Cardiac septum (tissue), 1 donor: ENCODE measurements at regions of chr17 and their contacts with region 1.

Region 1: DNA sequence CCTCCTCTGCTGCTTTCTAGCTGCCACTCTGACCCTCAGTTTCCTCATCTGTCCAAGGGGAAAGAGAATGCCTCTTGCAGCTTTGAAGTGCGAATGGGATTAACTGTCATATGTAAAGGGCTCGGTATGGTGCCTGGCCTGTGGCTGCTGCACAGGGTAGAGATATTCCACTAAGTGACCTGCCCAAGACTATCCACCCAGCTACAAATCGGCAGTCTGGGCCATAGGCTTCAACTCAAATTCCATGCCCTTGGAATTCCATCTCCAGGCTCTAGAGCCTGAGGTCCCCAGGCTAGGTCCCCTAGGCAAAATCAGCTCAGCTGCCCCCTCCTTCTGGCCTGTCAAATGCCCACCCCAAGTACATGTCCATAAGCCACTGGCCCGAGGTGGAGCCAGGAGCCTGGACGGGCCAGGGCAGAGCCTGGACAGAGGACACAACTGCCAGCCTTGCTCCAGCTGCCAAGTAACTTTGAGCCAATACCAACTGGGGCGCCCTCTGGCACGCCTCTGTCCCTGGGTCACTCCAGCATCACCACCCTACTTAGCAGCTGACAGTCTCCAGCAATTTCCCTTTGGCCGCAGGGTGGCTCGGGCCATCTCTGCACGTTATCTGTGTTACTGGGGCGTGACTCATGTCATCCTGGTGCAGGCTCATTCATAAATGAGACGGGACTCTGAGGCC is 57.2 kb downstream of the SDK2 start:
- DNase-seq: no peak

Region 2: GRCh38 chr17:73455050-73455687 is 131.9 kb before region 1 on chr17:
- intact Hi-C with region 1: no loop called
- DNase-seq: no peak

Region 3: DNA sequence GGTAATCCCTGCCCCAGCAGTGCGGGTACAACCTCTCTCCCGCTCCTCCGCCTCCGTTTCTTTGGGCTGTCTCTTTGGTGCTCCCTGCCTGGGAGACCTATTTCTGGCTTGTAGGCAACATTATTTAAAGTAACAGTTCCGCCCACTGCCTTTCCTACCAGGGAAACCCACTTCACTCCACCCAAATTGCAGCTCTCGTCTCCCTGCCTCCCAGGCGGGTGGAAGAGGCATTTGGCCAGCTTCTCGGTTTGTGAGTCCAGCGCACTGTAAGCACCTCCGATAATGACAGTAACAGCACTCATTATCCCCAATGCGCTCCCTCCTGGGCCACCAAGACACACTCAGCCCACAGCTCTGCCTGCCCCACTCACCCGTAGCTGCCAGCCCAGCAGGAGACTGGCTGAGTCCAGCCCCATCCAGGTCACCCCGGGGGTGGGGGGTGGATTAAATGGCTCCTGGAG is 110.1 kb before region 1 on chr17:
- intact Hi-C with region 1: loop called (anchors 5 kb)
- DNase-seq: peak; percentile 83

Region 4: GRCh38 chr17:73616120-73616872 is 29.2 kb after region 1 on chr17:
- intact Hi-C with region 1: no loop called
- DNase-seq: no peak

Region 5: GRCh38 chr17:74008196-74008595 is 421.1 kb after region 1 on chr17:
- intact Hi-C with region 1: no loop called
- DNase-seq: peak; percentile 79